ENCODE measurements at regions of chr2 and their contacts with region 1.

Region 1: GRCh38 chr2:20516646-20517341 is 69.9 kb downstream of the RHOB start:
- DNase-seq: peak in 1 of 5 donors; percentile 42
- ATAC-seq: peak; percentile 32 to 66 (median 47)
- H3K4me3 ChIP-seq: no peak overlapping the region
- H3K27ac ChIP-seq: peak overlapping the region in 10 of 12 donors; percentile 1 to 60 (median 46)
- H3K4me1 ChIP-seq: peaks cover 0 to 11% (median 0%) of the 10 kb centered on the region in 12 donors
- H3K27me3 ChIP-seq: no peaks in the 10 kb centered on the region
- CTCF ChIP-seq: no peak
- POLR2A ChIP-seq: no peak

Region 2: GRCh38 chr2:20568501-20569463 is 52.0 kb after region 1 on chr2:
- intact Hi-C with region 1: loop called in 1 of 10 experiments (anchors 5 kb)
- DNase-seq: peak in 1 of 5 donors; percentile 49
- ATAC-seq: peak; percentile 44 to 73 (median 54)
- H3K4me3 ChIP-seq: no peak overlapping the region
- H3K27ac ChIP-seq: peak overlapping the region; percentile 75 to 96 (median 82)
- H3K4me1 ChIP-seq: peaks cover 3 to 79% (median 64%) of the 10 kb centered on the region in 12 donors
- H3K27me3 ChIP-seq: no peaks in the 10 kb centered on the region
- CTCF ChIP-seq: no peak
- POLR2A ChIP-seq: no peak